ENCODE measurements at regions of chr12 and their contacts with region 1.

Region 1: DNA sequence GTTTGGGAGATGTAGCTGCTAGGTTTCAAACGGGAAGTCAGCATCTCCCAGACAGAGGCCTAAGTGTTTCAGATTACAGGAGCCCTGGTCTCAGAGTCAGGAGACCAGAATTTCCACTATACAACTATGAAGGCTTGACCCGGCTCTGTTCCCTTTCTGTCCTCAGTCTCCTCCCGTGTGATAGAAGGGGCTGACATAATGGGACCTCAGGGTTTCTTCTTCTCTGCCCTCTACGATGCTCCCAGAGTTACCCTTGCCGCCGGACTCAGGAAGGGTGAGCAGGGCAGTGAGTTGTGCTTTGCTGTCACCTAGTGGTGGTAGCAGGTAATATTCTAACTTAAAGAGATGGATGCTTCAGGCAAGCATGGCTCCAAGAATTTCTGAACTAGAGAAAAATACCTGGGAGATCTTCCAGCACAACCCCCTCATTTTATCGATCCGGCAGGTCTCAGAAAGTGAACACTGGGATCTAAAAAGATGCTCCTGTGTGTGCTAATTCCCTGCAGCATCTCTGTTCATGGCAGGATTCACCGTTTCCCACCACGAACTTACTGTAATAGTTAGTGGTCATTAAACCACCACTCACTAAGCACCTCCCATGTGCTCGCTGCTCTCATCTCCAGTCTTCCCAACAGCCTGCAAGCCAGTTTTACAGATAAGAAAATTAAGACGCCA is 84.4 kb downstream of the VWF start:
- DNase-seq: peak in 1 of 2 donors; percentile 41
- ATAC-seq: peak; percentile 74 to 84 (median 79)
- H3K4me3 ChIP-seq: no peak overlapping the region
- H3K27ac ChIP-seq: no peak overlapping the region
- H3K4me1 ChIP-seq: no peaks in the 10 kb centered on the region
- H3K27me3 ChIP-seq: no peaks in the 10 kb centered on the region
- CTCF ChIP-seq: peak; percentile 87

Region 2: GRCh38 chr12:5210179-5210922 is 829.7 kb before region 1 on chr12:
- intact Hi-C with region 1: no loop called
- DNase-seq: no peak
- ATAC-seq: no peak
- H3K4me3 ChIP-seq: no peak overlapping the region
- H3K27ac ChIP-seq: no peak overlapping the region
- H3K4me1 ChIP-seq: peaks cover 5% of the 10 kb centered on the region
- H3K27me3 ChIP-seq: no peaks in the 10 kb centered on the region
- CTCF ChIP-seq: no peak

Region 3: DNA sequence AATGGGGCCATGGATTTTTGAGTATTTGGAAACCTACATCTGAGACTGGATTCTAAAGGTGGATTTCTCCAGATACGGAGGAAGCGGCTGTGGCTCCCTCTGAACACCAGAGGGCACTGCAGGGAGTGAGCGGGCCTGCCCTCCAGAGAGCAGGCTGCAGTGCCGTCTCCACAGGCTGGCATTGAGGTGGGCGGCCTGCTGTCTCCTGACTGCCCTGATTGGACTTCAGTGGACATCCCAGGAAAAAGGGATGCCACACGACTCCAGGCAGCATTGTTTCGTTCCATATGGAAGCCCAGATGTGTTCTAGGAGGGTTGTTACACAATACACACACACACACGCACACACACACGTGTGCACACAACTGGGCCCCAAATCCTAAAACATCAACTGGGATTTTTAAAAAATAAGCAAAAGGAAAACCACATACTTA is 74.1 kb before region 1 on chr12:
- intact Hi-C with region 1: loop called in 1 of 2 experiments (anchors 5 kb)
- DNase-seq: no peak
- ATAC-seq: peak; percentile 34 to 75 (median 67)
- H3K4me3 ChIP-seq: no peak overlapping the region
- H3K27ac ChIP-seq: no peak overlapping the region
- H3K4me1 ChIP-seq: no peaks in the 10 kb centered on the region
- H3K27me3 ChIP-seq: no peaks in the 10 kb centered on the region
- CTCF ChIP-seq: peak; percentile 62

Region 4: DNA sequence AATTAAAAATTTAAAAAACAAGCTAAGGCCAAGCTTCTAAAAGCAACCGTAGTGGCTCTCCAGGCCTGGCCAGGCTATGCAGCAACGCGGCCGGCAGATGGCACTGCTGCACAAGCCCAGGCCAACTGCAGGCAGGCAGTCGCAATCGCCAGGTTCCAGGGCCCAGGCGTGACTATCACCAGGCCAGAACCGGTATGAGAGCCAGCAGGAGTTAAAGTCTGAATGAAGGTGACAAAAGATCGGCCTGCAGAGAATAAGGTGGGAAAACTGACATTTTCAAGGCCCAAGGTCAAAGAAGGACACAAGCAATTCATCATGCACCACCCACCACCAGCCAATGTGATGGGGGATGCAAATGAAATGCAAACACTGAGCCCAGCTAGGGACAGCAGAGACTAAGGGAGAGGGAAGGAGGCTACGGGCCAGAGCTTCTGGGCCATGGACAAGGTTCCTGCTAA is 51.3 kb before region 1 on chr12:
- intact Hi-C with region 1: loop called (anchors 1 kb)
- DNase-seq: peak; percentile 76 to 84
- ATAC-seq: peak; percentile 85 to 96 (median 93)
- H3K4me3 ChIP-seq: no peak overlapping the region
- H3K27ac ChIP-seq: no peak overlapping the region
- H3K4me1 ChIP-seq: no peaks in the 10 kb centered on the region
- H3K27me3 ChIP-seq: no peaks in the 10 kb centered on the region
- CTCF ChIP-seq: peak; percentile 94